HEK293 (cell line): ENCODE measurements at regions of chr5 and their contacts with region 1.

Region 1: GRCh38 chr5:95317085-95317484 is 32.2 kb upstream of the MCTP1 start:
- H3K4me3 ChIP-seq: no peak overlapping the region
- H3K27ac ChIP-seq: no peak overlapping the region
- H3K4me1 ChIP-seq: no peaks in the 10 kb centered on the region
- CTCF ChIP-seq: no peak

Region 2: GRCh38 chr5:95352691-95353090 is 35.6 kb after region 1 on chr5:
- CTCF ChIA-PET with region 1: interaction called, 3 read pairs
- POLR2A ChIA-PET with region 1: interaction called, 10 read pairs
- H3K4me3 ChIP-seq: no peak overlapping the region
- H3K27ac ChIP-seq: no peak overlapping the region
- H3K4me1 ChIP-seq: no peaks in the 10 kb centered on the region
- CTCF ChIP-seq: no peak

Region 3: DNA sequence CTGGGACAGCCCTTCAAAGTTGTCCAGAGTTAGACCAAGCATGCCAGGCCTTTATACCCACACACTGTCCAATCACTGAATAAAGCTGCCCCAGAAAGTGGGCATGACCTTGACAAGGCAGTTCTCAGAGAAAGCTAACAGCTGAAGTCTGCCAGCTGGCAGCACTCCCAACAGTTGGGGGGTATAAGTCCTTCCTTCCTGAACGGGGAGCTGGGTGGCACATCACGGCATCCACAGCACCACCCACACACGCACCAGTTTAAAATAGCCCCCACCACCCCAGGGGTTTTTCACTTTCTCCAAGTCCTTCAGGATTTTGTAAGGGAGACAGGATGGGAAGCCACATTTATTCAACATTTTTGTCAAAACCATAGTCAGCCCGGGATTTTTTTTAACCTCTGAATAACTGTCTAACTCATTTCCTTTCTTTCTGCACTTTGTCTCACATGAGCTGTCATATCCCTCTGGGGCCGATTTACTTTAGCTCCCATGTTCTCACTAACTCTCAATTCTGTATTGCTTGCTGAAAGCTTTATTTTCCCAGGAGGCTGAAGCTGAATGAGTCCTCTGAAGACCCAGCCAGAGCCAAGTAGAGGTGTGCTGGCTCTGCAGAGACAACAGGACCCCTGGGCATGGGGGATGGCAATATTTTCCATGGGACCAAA is 89.5 kb after region 1 on chr5:
- CTCF ChIA-PET with region 1: no interaction called
- POLR2A ChIA-PET with region 1: no interaction called
- H3K4me3 ChIP-seq: no peak overlapping the region
- H3K27ac ChIP-seq: no peak overlapping the region
- H3K4me1 ChIP-seq: no peaks in the 10 kb centered on the region
- CTCF ChIP-seq: no peak